ENCODE measurements at regions of chr12 and their contacts with region 1.

Region 1: GRCh38 chr12:11765817-11766794 is 116.6 kb downstream of the ETV6 start:
- DNase-seq: peak; percentile 92
- H3K4me3 Mint-ChIP-seq: peak overlapping the region; percentile 43
- H3K27ac Mint-ChIP-seq: peak overlapping the region; percentile 92
- H3K4me1 Mint-ChIP-seq: peaks cover 99% of the 10 kb centered on the region
- H3K27me3 Mint-ChIP-seq: no peaks in the 10 kb centered on the region

Region 2: GRCh38 chr12:10918886-10919285 is 847.2 kb before region 1 on chr12:
- CTCF ChIA-PET with region 1: no interaction called
- intact Hi-C with region 1: no loop called
- DNase-seq: no peak
- H3K4me3 Mint-ChIP-seq: no peak overlapping the region
- H3K27ac Mint-ChIP-seq: no peak overlapping the region
- H3K4me1 Mint-ChIP-seq: no peaks in the 10 kb centered on the region
- H3K27me3 Mint-ChIP-seq: no peaks in the 10 kb centered on the region

Region 3: DNA sequence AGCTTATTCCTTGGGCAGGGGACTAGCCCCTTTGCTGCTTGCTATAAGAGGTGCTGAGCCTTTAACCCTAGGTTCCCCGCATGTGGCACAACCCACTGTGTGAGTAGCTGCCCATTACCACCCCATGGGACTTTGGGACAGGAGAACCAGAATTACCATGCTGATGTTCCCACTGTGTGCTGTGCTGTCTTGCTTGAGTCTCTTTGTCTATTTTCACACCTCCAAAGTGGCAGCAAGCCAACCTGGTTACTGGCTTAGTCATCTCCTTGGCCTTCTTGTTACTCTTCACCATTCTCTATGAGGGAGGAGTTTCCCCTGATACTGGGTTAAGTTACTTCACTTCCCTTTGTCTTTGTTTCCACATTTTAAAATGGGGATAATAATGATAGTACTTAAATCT is 190.0 kb before region 1 on chr12:
- CTCF ChIA-PET with region 1: interaction called, 5 read pairs
- intact Hi-C with region 1: loop called (anchors 5 kb)
- DNase-seq: peak; percentile 87
- H3K4me3 Mint-ChIP-seq: no peak overlapping the region
- H3K27ac Mint-ChIP-seq: no peak overlapping the region
- H3K4me1 Mint-ChIP-seq: peaks cover 19% of the 10 kb centered on the region
- H3K27me3 Mint-ChIP-seq: peaks cover 2% of the 10 kb centered on the region

Region 4: GRCh38 chr12:11724888-11725311 is 41.2 kb before region 1 on chr12:
- CTCF ChIA-PET with region 1: interaction called, 15 read pairs
- intact Hi-C with region 1: no loop called
- DNase-seq: no peak
- H3K4me3 Mint-ChIP-seq: no peak overlapping the region
- H3K27ac Mint-ChIP-seq: no peak overlapping the region
- H3K4me1 Mint-ChIP-seq: peaks cover 50% of the 10 kb centered on the region
- H3K27me3 Mint-ChIP-seq: no peaks in the 10 kb centered on the region

Region 5: DNA sequence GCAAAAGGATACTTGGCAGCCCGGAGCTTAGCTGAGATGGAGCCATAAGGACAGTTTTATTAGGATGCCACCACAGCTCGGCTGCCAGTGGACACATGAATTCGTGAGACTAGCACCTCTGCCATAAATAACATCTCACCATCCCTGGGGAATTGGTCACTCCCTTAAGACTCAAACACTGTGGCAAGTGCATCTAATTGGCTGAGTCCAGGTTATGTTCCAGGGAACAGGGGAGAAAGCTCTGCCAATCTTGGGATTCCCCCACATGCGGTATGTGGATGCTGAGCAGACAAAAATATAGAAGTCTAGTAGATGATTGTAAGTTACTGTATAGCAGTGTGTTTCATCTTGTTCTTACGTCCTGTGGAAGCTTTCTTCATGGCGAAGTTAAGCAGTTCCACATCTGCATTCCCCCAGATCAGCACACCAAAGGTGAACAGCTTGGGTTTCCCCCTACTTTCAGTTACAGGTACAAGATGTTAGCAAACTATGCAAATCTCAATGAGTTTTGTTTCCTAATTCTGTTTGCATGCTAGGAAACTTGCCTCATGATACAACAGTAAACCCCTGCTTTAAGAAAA is 14.5 kb after region 1 on chr12:
- CTCF ChIA-PET with region 1: interaction called, 6 read pairs
- intact Hi-C with region 1: loop called (anchors 2 kb)
- DNase-seq: peak; percentile 68
- H3K4me3 Mint-ChIP-seq: peak overlapping the region; percentile 2
- H3K27ac Mint-ChIP-seq: peak overlapping the region; percentile 85
- H3K4me1 Mint-ChIP-seq: peaks cover 74% of the 10 kb centered on the region
- H3K27me3 Mint-ChIP-seq: no peaks in the 10 kb centered on the region

Region 6: DNA sequence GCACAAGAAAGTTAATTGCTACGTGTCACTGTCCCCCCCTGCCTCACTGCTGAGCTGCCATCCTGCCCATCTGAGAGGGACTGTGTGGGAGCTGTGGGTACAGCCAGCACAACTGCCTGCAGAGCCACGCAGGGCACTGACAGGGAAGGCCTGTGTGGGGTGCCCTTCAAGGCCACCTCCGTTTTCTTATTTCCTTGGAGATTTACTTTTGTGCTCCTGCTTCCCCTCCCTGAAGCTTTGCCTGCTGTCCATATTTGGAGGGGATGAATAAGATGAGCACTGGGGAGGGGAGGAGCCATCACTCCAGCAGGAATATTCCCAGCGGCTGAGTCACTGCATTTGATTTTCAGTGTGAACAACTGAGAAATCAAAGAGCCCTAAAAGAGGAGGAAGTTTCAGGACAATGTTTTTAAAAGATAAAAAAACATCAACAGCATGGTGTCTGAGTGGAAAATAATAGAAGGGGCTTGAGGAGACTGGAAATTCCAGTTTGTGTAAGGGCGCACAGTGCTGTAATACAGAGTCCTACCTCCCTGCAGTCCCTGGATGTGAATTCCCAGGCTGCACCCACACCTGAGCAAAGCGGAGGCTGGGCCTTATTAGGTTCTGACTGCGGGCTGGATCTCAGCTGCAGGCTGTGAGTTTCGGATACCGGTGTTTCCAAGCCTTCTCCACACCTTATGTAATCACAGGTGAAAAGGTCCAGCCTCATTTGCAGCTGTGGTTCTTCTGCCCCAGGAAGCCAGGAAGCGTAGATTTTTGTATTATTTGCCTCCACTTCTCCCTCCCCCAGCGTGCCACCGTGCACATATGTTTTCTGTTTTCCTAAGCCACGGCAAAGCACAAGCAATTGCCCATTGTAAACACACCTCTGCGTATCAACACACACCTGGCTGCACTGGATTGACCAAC is 112.0 kb after region 1 on chr12:
- CTCF ChIA-PET with region 1: no interaction called
- intact Hi-C with region 1: loop called (anchors 1 kb)
- DNase-seq: peak; percentile 26
- H3K4me3 Mint-ChIP-seq: no peak overlapping the region
- H3K27ac Mint-ChIP-seq: no peak overlapping the region
- H3K4me1 Mint-ChIP-seq: peaks cover 47% of the 10 kb centered on the region
- H3K27me3 Mint-ChIP-seq: no peaks in the 10 kb centered on the region

Region 7: DNA sequence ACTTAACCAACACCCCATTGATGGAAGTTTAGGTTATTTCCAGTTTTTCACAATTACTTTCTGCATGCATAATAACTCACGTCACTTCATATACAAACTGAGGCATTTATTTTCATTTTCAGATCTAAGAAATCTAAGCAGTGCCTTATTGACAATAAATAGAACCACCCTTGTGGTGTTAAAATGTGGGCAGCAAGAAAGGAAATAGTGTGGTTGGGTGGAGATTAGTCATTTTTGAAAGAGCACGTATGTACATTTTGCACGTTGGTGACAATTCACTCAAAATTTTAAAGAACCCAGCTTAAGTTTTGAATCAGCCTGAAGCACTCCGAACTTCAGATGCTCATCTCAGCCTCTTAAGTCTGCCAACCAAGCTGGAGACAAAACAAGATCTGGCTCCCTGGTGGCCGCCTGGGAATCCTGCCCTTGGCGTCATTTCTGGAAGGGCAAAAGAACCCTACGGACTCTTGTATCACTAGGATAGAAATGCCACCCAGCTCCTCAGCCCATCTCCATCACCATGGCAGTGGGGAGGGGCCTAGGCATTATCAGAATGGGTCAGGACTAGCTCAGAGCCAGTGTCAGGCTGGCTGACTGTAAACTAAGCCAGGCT is 215.1 kb after region 1 on chr12:
- CTCF ChIA-PET with region 1: no interaction called
- intact Hi-C with region 1: loop called (anchors 1 kb)
- DNase-seq: peak; percentile 72
- H3K4me3 Mint-ChIP-seq: no peak overlapping the region
- H3K27ac Mint-ChIP-seq: peak overlapping the region; percentile 98
- H3K4me1 Mint-ChIP-seq: peaks cover 51% of the 10 kb centered on the region
- H3K27me3 Mint-ChIP-seq: no peaks in the 10 kb centered on the region

Region 8: DNA sequence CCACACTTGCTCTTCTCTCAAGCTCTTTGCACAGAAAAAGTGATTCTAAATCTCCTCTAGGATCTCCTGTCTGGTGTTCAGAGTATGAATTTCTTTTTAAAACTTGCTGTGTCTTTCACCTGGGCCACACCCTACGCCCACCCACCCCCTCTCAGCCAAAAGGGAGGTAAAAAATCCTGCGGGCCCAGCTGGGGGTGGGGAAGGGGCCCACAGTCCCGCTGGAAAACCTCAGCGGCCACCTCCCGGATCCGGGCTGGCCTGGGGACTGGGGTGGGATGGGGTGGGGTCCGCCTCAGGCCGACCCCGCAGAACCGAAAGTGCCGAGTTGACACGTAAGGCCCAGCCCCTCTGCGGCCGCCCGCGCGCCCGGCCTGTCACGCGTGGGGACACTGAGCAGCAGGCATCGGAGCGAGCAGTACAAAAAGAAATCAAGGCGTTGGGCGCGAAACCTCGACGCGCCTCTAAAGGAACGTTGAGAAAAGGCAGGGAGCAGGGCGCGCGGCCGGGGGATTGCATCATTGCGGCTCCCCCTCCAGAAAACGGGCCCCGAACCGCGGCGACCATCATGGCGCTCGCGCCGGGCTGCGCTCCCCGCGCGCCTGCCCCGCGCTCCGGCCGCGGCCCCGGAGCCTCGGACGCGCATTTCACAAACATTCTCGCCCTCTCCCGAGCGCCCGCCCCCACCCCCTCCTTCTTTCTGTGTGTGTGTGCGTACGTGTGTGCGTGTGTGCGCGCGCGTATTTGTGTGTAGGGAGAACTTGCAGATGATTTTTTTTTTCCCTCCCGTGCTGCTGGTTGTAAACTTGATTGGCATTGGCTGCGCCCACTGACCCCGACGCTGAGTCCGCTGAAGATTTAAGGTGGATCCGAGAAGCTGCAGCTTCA is 958.8 kb after region 1 on chr12:
- CTCF ChIA-PET with region 1: no interaction called
- intact Hi-C with region 1: loop called (anchors 5 kb)
- DNase-seq: peak; percentile 94
- H3K4me3 Mint-ChIP-seq: peak overlapping the region; percentile 85
- H3K27ac Mint-ChIP-seq: peak overlapping the region; percentile 98
- H3K4me1 Mint-ChIP-seq: peaks cover 51% of the 10 kb centered on the region
- H3K27me3 Mint-ChIP-seq: no peaks in the 10 kb centered on the region